ENCODE measurements at regions of chr1 and their contacts with region 1.

Region 1: DNA sequence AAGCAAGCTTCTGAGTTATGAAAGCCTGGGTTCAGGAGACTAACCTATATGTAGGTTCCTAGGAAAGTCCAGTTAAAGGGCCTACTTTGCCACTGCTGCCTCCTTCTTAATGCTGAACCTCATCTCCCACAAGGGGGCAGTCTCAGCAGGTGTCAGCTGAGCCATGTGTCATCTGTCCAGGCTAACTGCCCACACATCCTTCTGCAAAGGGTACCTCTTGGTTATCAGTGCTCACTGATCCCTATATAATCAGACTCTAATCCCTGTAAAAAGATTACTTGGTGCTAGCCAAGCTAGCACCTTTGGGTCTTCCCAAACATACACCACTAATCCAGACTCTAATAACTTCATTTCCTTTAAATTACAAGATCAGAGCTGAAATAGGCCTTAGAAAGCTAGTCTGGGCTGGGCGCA is 9.0 kb downstream of the PRDX1 start:
- DNase-seq: peak; percentile 76
- H3K4me3 Mint-ChIP-seq: no peak overlapping the region
- H3K27ac Mint-ChIP-seq: no peak overlapping the region
- H3K4me1 Mint-ChIP-seq: peaks cover 10% of the 10 kb centered on the region
- H3K27me3 Mint-ChIP-seq: no peaks in the 10 kb centered on the region

Region 2: DNA sequence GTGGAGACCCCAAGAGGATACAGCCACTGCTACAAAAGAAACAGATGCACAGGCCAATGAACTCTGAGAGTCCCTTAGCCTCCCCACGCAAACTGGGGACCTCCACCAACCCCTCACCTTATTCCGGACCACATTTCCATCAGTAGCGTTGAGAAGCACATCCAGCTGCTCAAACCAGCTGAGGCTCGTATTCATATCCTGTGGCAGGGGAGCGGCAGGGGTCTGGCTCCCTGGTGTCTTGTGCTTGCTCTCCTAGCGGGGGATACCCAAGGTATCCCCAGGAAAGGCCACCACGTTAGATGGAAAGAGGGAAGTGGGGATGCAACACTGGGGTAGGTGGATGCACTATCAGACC is 13.3 kb before region 1 on chr1:
- CTCF ChIA-PET with region 1: interaction called, 13 read pairs
- DNase-seq: peak; percentile 44
- H3K4me3 Mint-ChIP-seq: peak overlapping the region; percentile 93
- H3K27ac Mint-ChIP-seq: peak overlapping the region; percentile 89
- H3K4me1 Mint-ChIP-seq: peaks cover 32% of the 10 kb centered on the region
- H3K27me3 Mint-ChIP-seq: no peaks in the 10 kb centered on the region

Region 3: DNA sequence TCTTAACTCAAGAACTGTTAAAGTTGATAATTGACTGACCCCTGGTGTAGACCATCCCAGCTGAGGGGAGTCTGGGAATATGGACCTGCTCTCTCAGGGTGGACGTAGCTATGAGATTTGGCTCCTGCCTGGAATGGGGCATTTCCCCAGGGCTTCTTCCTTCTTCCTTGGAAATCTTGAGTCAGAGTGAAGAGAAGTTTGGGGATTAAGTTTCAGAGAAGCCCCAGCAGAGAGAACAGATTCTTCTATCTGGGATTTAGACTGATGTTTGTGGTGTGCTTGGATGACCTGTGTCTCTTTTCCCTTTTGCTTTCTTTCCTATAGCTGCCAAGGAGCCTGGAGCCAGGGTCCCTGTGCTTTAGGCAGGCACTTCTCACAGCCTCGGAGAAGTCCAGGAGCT is 51.2 kb after region 1 on chr1:
- CTCF ChIA-PET with region 1: interaction called, 176 read pairs
- DNase-seq: no peak
- H3K4me3 Mint-ChIP-seq: no peak overlapping the region
- H3K27ac Mint-ChIP-seq: no peak overlapping the region
- H3K4me1 Mint-ChIP-seq: peaks cover 3% of the 10 kb centered on the region
- H3K27me3 Mint-ChIP-seq: no peaks in the 10 kb centered on the region

Region 4: GRCh38 chr1:45843474-45843905 is 330.8 kb after region 1 on chr1:
- CTCF ChIA-PET with region 1: no interaction called
- DNase-seq: no peak
- H3K4me3 Mint-ChIP-seq: no peak overlapping the region
- H3K27ac Mint-ChIP-seq: peak overlapping the region; percentile 38
- H3K4me1 Mint-ChIP-seq: peaks cover 15% of the 10 kb centered on the region
- H3K27me3 Mint-ChIP-seq: no peaks in the 10 kb centered on the region